HepG2 (cell line): ENCODE measurements at regions of chr5 and their contacts with region 1.

Region 1: GRCh38 chr5:111757355-111758283 is 625 bp upstream of the NREP start:
- DNase-seq: peak; percentile 90
- ATAC-seq: peak; percentile 80
- H3K4me3 ChIP-seq: peak overlapping the region; percentile 69 to 83 (median 72)
- H3K27ac ChIP-seq: peak overlapping the region; percentile 96
- H3K4me1 ChIP-seq: peaks cover 44% of the 10 kb centered on the region
- H3K27me3 ChIP-seq: peaks cover 0 to 11% of the 10 kb centered on the region in 2 experiments; a peak in 1 of 5 replicates
- CTCF ChIP-seq: peak; percentile 19; the same call in 1 of the 2 replicates
- EP300 ChIP-seq: no peak; a peak in 1 of 4 replicates
- POLR2A ChIP-seq: peak; percentile 59 to 65
- RAD21 ChIP-seq: peak; percentile 43

Region 2: DNA sequence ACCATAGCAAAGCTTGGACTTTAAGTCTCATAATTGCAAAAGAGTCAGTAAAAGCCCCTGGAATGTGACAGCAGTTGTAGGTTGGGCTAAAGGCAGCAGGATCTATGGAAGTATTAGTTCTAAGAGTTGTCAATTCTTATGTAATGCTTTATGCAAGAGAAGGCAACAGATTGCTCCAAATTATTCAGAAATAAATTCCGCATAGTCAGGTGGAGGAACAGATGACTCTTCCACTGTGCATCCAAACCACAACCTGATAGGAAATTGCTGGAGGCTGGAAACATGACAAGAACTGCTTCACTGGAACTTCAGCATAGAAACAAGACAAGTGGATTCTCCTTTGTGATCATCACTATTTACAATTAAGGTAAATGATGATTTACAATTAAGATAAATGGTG is 346.3 kb before region 1 on chr5:
- CTCF ChIA-PET with region 1: no interaction called
- POLR2A ChIA-PET with region 1: no interaction called
- in situ Hi-C with region 1: no loop called
- intact Hi-C with region 1: no loop called
- DNase-seq: no peak
- ATAC-seq: no peak
- H3K4me3 ChIP-seq: no peak overlapping the region
- H3K27ac ChIP-seq: no peak overlapping the region
- H3K4me1 ChIP-seq: no peaks in the 10 kb centered on the region
- H3K27me3 ChIP-seq: no peaks in the 10 kb centered on the region
- CTCF ChIP-seq: no peak
- EP300 ChIP-seq: no peak
- POLR2A ChIP-seq: no peak
- RAD21 ChIP-seq: no peak

Region 3: GRCh38 chr5:111512375-111513130 is 245.1 kb before region 1 on chr5 and contains the start of gene STARD4:
- CTCF ChIA-PET with region 1: no interaction called
- POLR2A ChIA-PET with region 1: no interaction called
- in situ Hi-C with region 1: no loop called
- intact Hi-C with region 1: loop called (anchors 5 kb)
- DNase-seq: peak; percentile 92
- ATAC-seq: peak; percentile 97
- H3K4me3 ChIP-seq: peak within 1 kb of the TSS; percentile 89 to 97 (median 96)
- H3K27ac ChIP-seq: peak within 1 kb of the TSS; percentile 97
- H3K4me1 ChIP-seq: peaks cover 42% of the 10 kb centered on the region
- H3K27me3 ChIP-seq: no peaks in the 10 kb centered on the region; a peak in 1 of 5 replicates
- CTCF ChIP-seq: no peak
- EP300 ChIP-seq: peak in 1 of 2 experiments; percentile 59; a peak in 2 of 4 replicates
- POLR2A ChIP-seq: peak; percentile 89 to 95
- RAD21 ChIP-seq: peak; percentile 52; the same call in 1 of the 2 replicates
- total RNA-seq, gene STARD4: 66.9 and 92.2 TPM in 2 replicates

Region 4: GRCh38 chr5:111550279-111551020 is 207.2 kb before region 1 on chr5:
- CTCF ChIA-PET with region 1: no interaction called
- POLR2A ChIA-PET with region 1: no interaction called
- in situ Hi-C with region 1: no loop called
- intact Hi-C with region 1: loop called (anchors 2 kb)
- DNase-seq: peak; percentile 63
- ATAC-seq: peak; percentile 97
- H3K4me3 ChIP-seq: no peak overlapping the region
- H3K27ac ChIP-seq: no peak overlapping the region
- H3K4me1 ChIP-seq: no peaks in the 10 kb centered on the region
- H3K27me3 ChIP-seq: no peaks in the 10 kb centered on the region
- CTCF ChIP-seq: peak; percentile 77
- EP300 ChIP-seq: no peak
- POLR2A ChIP-seq: no peak
- RAD21 ChIP-seq: peak; percentile 64

Region 5: DNA sequence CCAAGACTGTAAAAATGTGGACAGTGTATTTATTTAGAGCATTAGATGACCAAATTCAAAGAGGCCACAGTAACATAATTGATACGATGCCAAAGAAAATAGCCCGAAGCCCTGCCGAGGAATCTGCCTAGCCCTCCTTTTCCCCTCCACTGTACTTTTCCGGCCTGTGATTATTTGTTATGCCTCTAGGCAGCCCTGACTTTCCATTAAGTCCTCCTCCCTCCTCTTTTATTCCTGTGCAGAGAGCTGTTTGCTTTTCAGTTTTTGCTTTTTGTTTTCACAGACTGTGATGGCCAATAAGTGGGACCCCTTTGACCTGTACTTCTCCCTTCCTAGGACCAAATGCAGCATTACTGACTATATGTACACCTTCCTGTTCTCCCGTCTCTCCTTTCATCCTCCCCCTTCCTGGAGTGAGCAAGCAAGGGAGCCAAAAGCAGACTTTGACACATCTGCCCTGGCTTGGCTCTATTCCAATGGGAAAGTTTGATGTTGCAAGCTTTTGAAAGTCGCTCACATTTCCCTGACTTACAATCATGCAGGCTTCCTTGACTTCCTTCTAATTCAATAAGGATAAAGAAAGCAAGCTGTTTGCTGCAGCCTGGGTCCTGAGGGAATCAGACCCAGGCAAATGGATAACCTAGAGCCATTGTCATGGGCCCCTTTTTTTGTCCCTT is 76.7 kb before region 1 on chr5:
- CTCF ChIA-PET with region 1: no interaction called
- POLR2A ChIA-PET with region 1: interaction called, 3 read pairs
- in situ Hi-C with region 1: no loop called
- intact Hi-C with region 1: loop called (anchors 2 kb)
- DNase-seq: peak; percentile 90
- ATAC-seq: peak; percentile 98
- H3K4me3 ChIP-seq: peak overlapping the region in 1 of 3 experiments; percentile 37; a peak in 2 of 6 replicates
- H3K27ac ChIP-seq: peak overlapping the region; percentile 0
- H3K4me1 ChIP-seq: peaks cover 25% of the 10 kb centered on the region
- H3K27me3 ChIP-seq: peaks cover 0 to 7% of the 10 kb centered on the region in 2 experiments; a peak in 2 of 5 replicates
- CTCF ChIP-seq: no peak
- EP300 ChIP-seq: no peak
- POLR2A ChIP-seq: no peak
- RAD21 ChIP-seq: no peak

Region 6: DNA sequence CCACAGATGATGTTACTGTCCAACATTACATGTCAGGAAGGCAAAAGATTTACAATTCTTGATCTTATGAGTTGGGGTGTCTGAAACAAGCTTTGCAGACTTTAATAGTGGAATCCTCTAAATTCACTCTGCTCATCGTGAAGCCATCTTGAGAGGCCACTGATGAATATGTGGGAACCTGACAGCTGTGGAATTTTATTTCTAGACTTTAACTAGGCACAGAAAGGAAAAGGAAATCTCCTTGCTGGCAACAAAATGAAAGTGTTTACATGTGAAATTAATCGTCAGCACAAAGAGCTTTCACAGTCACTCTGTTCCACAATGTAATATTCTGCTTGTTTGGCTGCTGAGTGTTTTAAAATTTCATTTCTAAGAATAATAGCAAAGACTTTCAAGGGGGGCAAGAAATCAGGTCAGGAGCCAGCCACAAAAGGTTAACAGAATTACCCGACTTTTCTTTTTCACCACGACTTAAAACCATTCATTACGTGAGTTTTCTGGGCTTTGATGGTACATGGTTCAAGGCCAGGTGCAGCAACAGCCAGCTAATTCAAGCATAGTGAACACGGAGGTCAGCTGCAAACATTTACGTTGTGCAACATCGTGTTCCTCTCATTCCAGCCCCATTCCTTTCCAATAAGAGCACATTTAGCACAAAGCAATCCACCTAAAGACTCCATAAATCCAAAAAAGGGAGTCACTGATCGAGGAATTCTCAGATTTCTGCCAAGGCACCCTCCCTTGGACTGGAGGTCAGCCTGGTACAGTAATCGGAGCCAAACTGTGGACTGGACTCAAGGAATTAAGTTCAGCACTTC is 15.2 kb before region 1 on chr5:
- CTCF ChIA-PET with region 1: no interaction called
- POLR2A ChIA-PET with region 1: interaction called, 85 read pairs
- in situ Hi-C with region 1: no loop called
- intact Hi-C with region 1: loop called (anchors 1 kb)
- DNase-seq: peak; percentile 96
- ATAC-seq: peak; percentile 95
- H3K4me3 ChIP-seq: peak overlapping the region; percentile 41 to 51 (median 47); a peak in 5 of 6 replicates
- H3K27ac ChIP-seq: peak overlapping the region; percentile 93
- H3K4me1 ChIP-seq: peaks cover 75% of the 10 kb centered on the region
- H3K27me3 ChIP-seq: no peaks in the 10 kb centered on the region
- CTCF ChIP-seq: no peak
- EP300 ChIP-seq: peak; percentile 93
- POLR2A ChIP-seq: peak; percentile 31 to 42; a peak in 1 of 4 replicates
- RAD21 ChIP-seq: peak; percentile 44; the same call in 1 of the 2 replicates

Region 7: DNA sequence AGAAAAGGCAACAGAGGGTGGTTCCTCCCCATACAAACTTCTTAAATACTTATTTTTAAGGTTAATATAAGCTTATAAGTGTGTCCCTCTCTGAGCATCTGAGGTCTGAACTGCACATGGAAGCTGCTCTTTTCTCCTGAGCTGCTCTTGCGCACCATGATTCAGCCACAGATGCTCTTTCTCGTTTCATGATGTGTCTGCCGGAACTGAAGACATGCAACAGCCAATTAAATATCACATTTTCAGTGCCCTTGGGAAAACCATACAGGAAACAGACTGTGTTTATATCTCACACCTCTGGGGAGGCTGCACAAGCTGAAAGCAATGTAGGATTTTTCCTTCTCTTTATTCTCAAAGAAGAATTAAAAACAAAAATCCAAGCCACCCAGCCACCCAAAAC is 96.1 kb after region 1 on chr5:
- CTCF ChIA-PET with region 1: no interaction called
- POLR2A ChIA-PET with region 1: no interaction called
- in situ Hi-C with region 1: no loop called
- intact Hi-C with region 1: no loop called
- DNase-seq: no peak
- ATAC-seq: no peak
- H3K4me3 ChIP-seq: no peak overlapping the region
- H3K27ac ChIP-seq: no peak overlapping the region
- H3K4me1 ChIP-seq: no peaks in the 10 kb centered on the region
- H3K27me3 ChIP-seq: no peaks in the 10 kb centered on the region
- CTCF ChIP-seq: no peak
- EP300 ChIP-seq: no peak
- POLR2A ChIP-seq: no peak
- RAD21 ChIP-seq: no peak

Region 8: GRCh38 chr5:111869681-111870080 is 112.1 kb after region 1 on chr5:
- CTCF ChIA-PET with region 1: no interaction called
- POLR2A ChIA-PET with region 1: no interaction called
- in situ Hi-C with region 1: no loop called
- intact Hi-C with region 1: no loop called
- DNase-seq: no peak
- ATAC-seq: no peak
- H3K4me3 ChIP-seq: no peak overlapping the region
- H3K27ac ChIP-seq: no peak overlapping the region
- H3K4me1 ChIP-seq: no peaks in the 10 kb centered on the region
- H3K27me3 ChIP-seq: no peaks in the 10 kb centered on the region
- CTCF ChIP-seq: no peak
- EP300 ChIP-seq: no peak
- POLR2A ChIP-seq: no peak
- RAD21 ChIP-seq: no peak

Region 9: DNA sequence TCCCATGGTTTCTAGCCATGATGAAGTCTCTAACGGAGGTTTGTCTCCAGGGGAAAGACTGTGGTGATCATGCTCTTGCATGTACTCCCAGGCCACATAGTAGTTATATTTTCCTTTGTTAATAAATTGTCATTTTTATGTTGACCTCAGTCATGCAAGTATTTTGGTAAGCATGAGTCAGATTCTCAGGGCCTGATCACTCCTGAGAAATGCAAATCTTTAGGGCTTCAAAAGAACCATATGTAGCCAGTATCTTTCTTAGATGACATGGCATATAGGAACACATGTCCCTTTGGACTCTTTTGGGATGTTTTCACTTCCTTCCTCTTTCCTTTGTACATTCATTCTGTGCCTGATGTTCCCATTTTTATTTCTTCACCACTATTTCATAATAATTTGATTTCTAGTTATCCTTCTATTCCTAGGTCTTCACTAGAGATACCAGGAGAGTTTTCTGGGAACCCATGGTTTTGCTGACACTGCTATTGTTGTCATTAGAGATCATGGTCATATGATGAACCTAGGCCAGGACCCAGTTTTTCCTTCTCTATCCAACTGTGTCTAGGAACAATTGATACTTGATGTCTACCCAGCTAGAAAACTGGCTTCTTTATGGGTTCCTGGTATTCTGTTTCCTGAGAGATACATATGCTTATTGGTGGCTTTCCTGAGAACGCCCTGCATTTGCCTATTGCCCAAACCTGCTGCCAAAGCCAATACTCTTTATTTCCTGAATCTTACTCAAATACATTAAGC is 247.4 kb after region 1 on chr5:
- CTCF ChIA-PET with region 1: no interaction called
- POLR2A ChIA-PET with region 1: no interaction called
- in situ Hi-C with region 1: no loop called
- intact Hi-C with region 1: no loop called
- DNase-seq: no peak
- ATAC-seq: no peak
- H3K4me3 ChIP-seq: no peak overlapping the region
- H3K27ac ChIP-seq: no peak overlapping the region
- H3K4me1 ChIP-seq: no peaks in the 10 kb centered on the region
- H3K27me3 ChIP-seq: no peaks in the 10 kb centered on the region; a peak in 1 of 5 replicates
- CTCF ChIP-seq: no peak
- EP300 ChIP-seq: no peak
- POLR2A ChIP-seq: no peak
- RAD21 ChIP-seq: no peak

Region 10: DNA sequence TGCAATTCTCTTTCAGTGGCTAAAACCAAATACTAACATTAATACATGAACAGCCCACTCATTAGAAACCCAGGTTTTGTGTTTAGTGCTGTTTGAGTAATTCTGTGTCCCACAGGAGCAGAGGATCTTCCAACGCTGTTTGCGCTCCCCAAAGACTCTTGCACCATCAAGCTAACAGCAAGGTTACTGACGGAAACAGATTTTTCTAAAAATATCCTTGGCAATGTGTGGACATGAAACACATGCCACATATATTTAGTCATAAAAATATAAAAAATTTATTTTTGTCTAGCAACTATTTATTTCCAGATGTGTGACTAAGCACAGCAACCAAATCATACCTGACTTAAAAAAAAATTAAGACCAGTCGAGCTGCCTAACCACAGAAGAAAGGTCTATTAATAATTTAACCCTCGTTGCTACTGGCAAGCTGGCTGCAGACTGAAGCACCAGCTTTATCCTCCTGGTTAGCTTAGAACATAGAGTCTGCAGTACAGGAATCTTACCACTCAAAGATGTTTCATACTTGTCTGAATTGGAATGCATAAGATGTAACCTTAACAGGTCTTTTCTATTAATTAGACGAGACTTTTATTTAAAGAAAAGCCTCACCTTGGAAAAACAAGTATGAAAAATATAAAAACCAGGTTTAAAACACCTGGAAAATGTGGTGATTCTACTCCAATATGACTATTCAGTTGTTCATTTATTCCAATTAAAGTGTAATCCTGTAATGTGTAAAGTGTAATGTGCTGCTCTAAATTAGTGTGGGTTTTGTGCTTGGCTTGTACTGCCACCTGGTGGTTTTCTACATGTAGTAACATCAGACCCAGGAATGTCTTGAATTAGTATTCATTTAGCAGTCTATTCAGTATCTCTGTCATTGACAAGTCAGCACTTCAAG is 389.0 kb after region 1 on chr5:
- CTCF ChIA-PET with region 1: no interaction called
- POLR2A ChIA-PET with region 1: no interaction called
- in situ Hi-C with region 1: no loop called
- intact Hi-C with region 1: loop called (anchors 1 kb)
- DNase-seq: peak; percentile 56
- ATAC-seq: peak; percentile 93
- H3K4me3 ChIP-seq: no peak overlapping the region
- H3K27ac ChIP-seq: no peak overlapping the region
- H3K4me1 ChIP-seq: no peaks in the 10 kb centered on the region
- H3K27me3 ChIP-seq: no peaks in the 10 kb centered on the region
- CTCF ChIP-seq: peak; percentile 82
- EP300 ChIP-seq: no peak
- POLR2A ChIP-seq: no peak
- RAD21 ChIP-seq: peak; percentile 74